ENCODE measurements at regions of chr3 and their contacts with region 1.

Region 1: DNA sequence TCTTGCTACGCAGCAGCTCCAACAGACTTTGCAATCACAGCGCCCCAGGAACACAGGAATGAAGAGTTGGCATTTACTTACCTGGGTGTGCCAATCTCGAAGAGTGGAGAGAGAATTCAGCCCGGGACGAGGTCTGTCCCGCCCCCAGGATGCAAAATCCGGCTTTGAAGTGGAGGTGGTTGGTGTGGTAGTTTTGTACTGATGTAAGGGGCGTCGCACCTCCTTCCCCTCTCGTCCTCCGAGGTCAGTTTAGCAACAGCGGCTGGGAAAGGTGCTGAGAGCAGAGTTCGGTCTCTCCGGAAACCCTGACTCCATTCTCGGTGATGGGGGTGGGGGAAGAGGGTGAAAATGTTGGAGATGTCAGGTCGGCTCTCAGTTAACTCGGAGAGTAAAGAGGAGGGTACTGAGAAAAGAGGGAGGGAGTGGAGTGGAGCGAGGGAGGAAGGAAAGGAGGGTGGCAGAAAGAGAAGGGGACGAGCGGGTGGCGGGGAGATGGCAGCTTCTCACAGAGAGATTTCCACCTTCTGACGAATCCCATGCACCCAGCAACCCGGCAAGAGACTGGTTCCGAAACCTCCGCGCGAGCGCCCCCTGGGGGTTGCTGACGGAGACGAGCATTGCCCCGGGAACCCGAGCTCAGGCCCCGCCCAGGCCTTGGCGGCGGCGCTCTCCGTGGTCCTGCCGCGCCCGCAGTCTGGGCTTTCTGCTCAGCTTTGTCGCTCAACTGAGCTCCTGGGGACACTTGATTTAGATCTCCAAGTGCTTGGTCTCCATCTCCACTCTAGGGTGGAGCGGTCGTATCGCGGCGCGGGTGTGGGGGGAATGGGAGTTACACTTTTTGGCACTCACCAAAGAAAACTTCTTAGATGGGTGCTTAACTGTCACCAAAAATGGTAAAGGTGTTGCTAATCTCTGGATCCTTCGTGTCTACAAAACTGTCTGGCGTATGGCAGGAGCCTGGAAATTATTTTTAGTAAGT is at the start of gene CPNE4:
- DNase-seq: peak; percentile 77 to 100
- H3K4me3 ChIP-seq: peak within 1 kb of the TSS; percentile 46 to 79 (median 70)
- H3K27ac ChIP-seq: no peak within 1 kb of the TSS
- H3K4me1 ChIP-seq: no peaks in the 10 kb centered on the region; a peak in 2 of 7 replicates
- H3K27me3 ChIP-seq: peaks cover 0 to 20% (median 8%) of the 10 kb centered on the region in 4 experiments; a peak in 6 of 7 replicates
- CTCF ChIP-seq: peak; percentile 77 to 91 (median 88)
- EP300 ChIP-seq: no peak
- POLR2A ChIP-seq: no peak; a peak in 1 of 3 replicates
- RAD21 ChIP-seq: peak; percentile 67 to 77
- total RNA-seq, gene CPNE4: 1.9 and 3.8 TPM in 2 replicates

Region 2: DNA sequence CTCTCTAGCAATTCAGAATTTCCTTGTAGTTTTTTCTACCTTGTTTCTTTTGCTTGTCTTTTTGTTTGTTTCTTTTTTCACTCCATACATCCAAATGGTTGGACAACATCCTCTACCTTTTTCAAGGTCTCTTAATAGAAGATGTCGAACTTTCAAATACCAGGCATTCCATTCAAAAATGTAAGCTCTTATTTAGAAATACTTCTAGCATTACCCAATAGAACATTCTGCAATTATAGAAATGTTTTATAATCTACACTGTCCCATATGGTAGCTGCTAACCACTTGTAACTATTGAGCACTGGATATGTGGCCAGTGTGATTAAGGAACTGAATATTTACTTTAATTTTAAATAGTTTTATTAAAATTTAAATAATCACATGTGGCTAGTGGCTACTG is 335.8 kb before region 1 on chr3:
- CTCF ChIA-PET with region 1: no interaction called
- POLR2A ChIA-PET with region 1: no interaction called
- DNase-seq: no peak
- H3K4me3 ChIP-seq: no peak overlapping the region
- H3K27ac ChIP-seq: no peak overlapping the region
- H3K4me1 ChIP-seq: no peaks in the 10 kb centered on the region
- H3K27me3 ChIP-seq: no peaks in the 10 kb centered on the region
- CTCF ChIP-seq: no peak
- EP300 ChIP-seq: no peak
- POLR2A ChIP-seq: no peak
- RAD21 ChIP-seq: no peak

Region 3: GRCh38 chr3:131840156-131840797 is 194.5 kb before region 1 on chr3:
- CTCF ChIA-PET with region 1: no interaction called
- POLR2A ChIA-PET with region 1: no interaction called
- DNase-seq: no peak
- H3K4me3 ChIP-seq: no peak overlapping the region
- H3K27ac ChIP-seq: no peak overlapping the region
- H3K4me1 ChIP-seq: no peaks in the 10 kb centered on the region
- H3K27me3 ChIP-seq: no peaks in the 10 kb centered on the region
- CTCF ChIP-seq: no peak
- EP300 ChIP-seq: no peak
- POLR2A ChIP-seq: no peak
- RAD21 ChIP-seq: no peak

Region 4: GRCh38 chr3:132006605-132007204 is 28.1 kb before region 1 on chr3:
- CTCF ChIA-PET with region 1: interaction called, 34 read pairs
- POLR2A ChIA-PET with region 1: no interaction called
- DNase-seq: peak in 1 of 2 experiments; percentile 66
- H3K4me3 ChIP-seq: no peak overlapping the region
- H3K27ac ChIP-seq: no peak overlapping the region
- H3K4me1 ChIP-seq: peaks cover 0 to 7% (median 4%) of the 10 kb centered on the region in 4 experiments; a peak in 5 of 7 replicates
- H3K27me3 ChIP-seq: no peaks in the 10 kb centered on the region
- CTCF ChIP-seq: peak; percentile 69 to 83 (median 81)
- EP300 ChIP-seq: no peak
- POLR2A ChIP-seq: no peak
- RAD21 ChIP-seq: peak; percentile 53 to 75

Region 5: GRCh38 chr3:132057909-132058308 is 23.1 kb after region 1 on chr3:
- CTCF ChIA-PET with region 1: interaction called, 10 read pairs
- POLR2A ChIA-PET with region 1: no interaction called
- DNase-seq: no peak
- H3K4me3 ChIP-seq: no peak overlapping the region
- H3K27ac ChIP-seq: no peak overlapping the region
- H3K4me1 ChIP-seq: no peaks in the 10 kb centered on the region
- H3K27me3 ChIP-seq: no peaks in the 10 kb centered on the region; a peak in 1 of 7 replicates
- CTCF ChIP-seq: peak in 1 of 3 experiments; percentile 30; a peak in 1 of 4 replicates
- EP300 ChIP-seq: no peak
- POLR2A ChIP-seq: no peak
- RAD21 ChIP-seq: 0 out of 4 replicates have a peak, but pooled peaks of 1 of the 2 experiments have one; percentile 14

Region 6: GRCh38 chr3:132180337-132180791 is 145.6 kb after region 1 on chr3:
- CTCF ChIA-PET with region 1: interaction called, 72 read pairs
- POLR2A ChIA-PET with region 1: no interaction called
- DNase-seq: peak; percentile 5 to 47
- H3K4me3 ChIP-seq: no peak overlapping the region
- H3K27ac ChIP-seq: no peak overlapping the region
- H3K4me1 ChIP-seq: peaks cover 0 to 3% (median 2%) of the 10 kb centered on the region in 4 experiments; a peak in 2 of 7 replicates
- H3K27me3 ChIP-seq: no peaks in the 10 kb centered on the region; a peak in 1 of 7 replicates
- CTCF ChIP-seq: peak in 2 of 3 experiments; percentile 61 to 69; a peak in 3 of 4 replicates
- EP300 ChIP-seq: no peak
- POLR2A ChIP-seq: no peak
- RAD21 ChIP-seq: peak; percentile 85 to 91

Region 7: DNA sequence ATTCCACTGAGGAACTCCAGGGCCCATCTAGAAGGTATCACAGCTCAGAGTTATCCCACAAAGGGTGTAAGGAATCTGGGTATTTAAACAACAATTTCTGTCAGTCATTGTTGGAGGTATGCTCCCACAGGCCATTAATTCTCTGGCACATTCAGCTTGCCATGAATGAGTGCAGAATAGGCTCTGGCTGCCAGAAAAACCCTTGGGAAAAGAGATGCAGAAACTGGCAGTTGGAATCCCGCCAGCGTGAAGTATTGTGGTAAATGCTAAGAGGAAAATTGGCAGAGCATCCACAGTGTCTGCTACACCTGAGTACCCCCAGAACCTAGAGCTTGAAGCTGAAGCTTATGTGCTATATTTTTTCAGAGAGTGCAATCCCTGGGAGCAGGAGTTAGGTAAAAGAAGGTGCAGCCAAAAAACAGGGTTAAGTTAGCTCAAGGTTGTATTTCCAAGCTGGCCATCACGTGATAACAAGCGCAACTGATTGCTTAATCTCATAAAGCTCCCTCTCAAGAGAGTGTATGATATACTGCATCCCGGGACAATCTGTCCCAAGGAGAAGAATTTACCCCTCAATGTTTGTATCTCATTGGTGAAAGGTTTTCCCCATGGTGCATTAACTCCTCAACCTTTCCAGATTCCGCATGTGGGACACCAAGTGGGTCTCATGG is 188.2 kb after region 1 on chr3:
- CTCF ChIA-PET with region 1: interaction called, 16 read pairs
- POLR2A ChIA-PET with region 1: no interaction called
- DNase-seq: no peak
- H3K4me3 ChIP-seq: no peak overlapping the region
- H3K27ac ChIP-seq: no peak overlapping the region
- H3K4me1 ChIP-seq: peaks cover 0 to 8% (median 5%) of the 10 kb centered on the region in 4 experiments; a peak in 4 of 7 replicates
- H3K27me3 ChIP-seq: no peaks in the 10 kb centered on the region
- CTCF ChIP-seq: no peak
- EP300 ChIP-seq: no peak
- POLR2A ChIP-seq: no peak
- RAD21 ChIP-seq: no peak